WTC11 (cell line): ENCODE measurements at regions of chr3 and their contacts with region 1.

Region 1: DNA sequence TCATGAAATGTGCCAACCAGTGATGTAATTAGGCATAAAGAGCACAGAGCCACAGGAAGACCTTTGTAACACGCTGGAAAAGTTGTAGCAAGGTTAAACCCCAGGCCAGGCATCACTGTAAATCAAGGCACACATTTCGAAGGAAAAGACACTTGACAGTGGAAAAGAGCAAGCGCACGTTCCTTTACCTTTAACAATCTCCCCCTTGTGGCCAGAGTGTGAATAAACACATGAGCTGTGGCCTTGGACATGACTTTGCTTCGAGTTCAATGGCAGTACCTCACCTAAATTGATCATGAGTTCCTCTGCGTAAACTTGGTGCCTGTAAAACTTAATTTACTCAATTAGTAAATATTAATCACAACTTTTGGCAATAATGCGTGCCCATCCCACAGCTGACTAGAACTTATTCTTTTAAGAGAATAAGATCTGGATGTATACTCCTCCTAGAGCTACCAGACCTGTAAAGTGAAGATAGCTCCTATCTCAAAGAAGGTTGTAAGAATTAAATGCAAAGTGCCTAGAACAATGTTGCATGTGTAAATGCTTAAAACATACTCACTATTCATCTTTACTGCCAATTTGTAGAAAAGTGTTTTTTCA is 757.0 kb upstream of the NECTIN3 start:
- DNase-seq: peak; percentile 61
- ATAC-seq: peak; percentile 80
- H3K4me3 Mint-ChIP-seq: no peak overlapping the region
- H3K27ac Mint-ChIP-seq: no peak overlapping the region
- H3K4me1 Mint-ChIP-seq: peaks cover 2% of the 10 kb centered on the region; the same call in 1 of the 2 replicates
- H3K27me3 Mint-ChIP-seq: no peaks in the 10 kb centered on the region
- CTCF ChIP-seq: peak; percentile 76

Region 2: GRCh38 chr3:109532257-109533216 is 782.1 kb before region 1 on chr3:
- CTCF ChIA-PET with region 1: interaction called, 11 read pairs
- POLR2A ChIA-PET with region 1: no interaction called
- DNase-seq: peak; percentile 72
- ATAC-seq: peak; percentile 98
- H3K4me3 Mint-ChIP-seq: no peak overlapping the region
- H3K27ac Mint-ChIP-seq: no peak overlapping the region
- H3K4me1 Mint-ChIP-seq: no peaks in the 10 kb centered on the region
- H3K27me3 Mint-ChIP-seq: no peaks in the 10 kb centered on the region
- CTCF ChIP-seq: peak; percentile 42; the same call in 1 of the 2 replicates

Region 3: GRCh38 chr3:109910772-109911171 is 403.8 kb before region 1 on chr3:
- CTCF ChIA-PET with region 1: no interaction called
- POLR2A ChIA-PET with region 1: no interaction called
- DNase-seq: no peak
- ATAC-seq: no peak
- H3K4me3 Mint-ChIP-seq: no peak overlapping the region
- H3K27ac Mint-ChIP-seq: no peak overlapping the region
- H3K4me1 Mint-ChIP-seq: no peaks in the 10 kb centered on the region
- H3K27me3 Mint-ChIP-seq: no peaks in the 10 kb centered on the region
- CTCF ChIP-seq: no peak

Region 4: GRCh38 chr3:110332629-110333028 is 18.0 kb after region 1 on chr3:
- CTCF ChIA-PET with region 1: no interaction called
- POLR2A ChIA-PET with region 1: no interaction called
- DNase-seq: no peak
- ATAC-seq: no peak
- H3K4me3 Mint-ChIP-seq: no peak overlapping the region
- H3K27ac Mint-ChIP-seq: no peak overlapping the region
- H3K4me1 Mint-ChIP-seq: peaks cover 5% of the 10 kb centered on the region; the same call in 1 of the 2 replicates
- H3K27me3 Mint-ChIP-seq: no peaks in the 10 kb centered on the region
- CTCF ChIP-seq: no peak